MCF 10A (cell line): ENCODE measurements at regions of chr2 and their contacts with region 1.

Region 1: DNA sequence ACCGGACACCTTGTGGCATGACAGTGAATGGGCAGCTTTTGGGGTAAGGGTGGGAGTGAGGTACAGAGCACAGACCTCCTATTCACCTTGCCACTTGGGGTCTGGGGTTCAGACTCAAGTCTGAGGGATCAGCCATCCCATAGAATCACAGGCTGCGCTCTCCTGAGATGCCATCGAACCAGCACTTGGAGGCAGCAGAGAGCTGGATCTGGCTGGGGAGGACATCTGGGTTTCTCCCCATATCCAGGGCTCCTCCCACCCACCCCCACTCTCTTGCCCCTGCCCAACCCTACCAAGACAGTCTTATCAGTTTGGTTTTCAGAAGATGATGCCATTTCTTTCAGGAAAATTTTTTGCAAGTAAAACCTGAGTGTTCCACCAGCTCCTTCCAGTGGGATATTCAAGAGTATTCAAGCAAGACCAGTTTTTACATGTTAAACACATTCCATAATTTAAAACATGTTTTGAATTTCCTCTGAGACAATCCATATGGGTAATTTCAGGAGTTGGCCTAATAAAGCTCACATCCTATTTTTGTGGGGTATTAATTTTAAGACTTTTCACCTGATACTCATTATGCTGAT is 29.2 kb upstream of the TEX44 start:
- DNase-seq: peak; percentile 70
- H3K4me3 Mint-ChIP-seq: no peak overlapping the region
- H3K27ac Mint-ChIP-seq: no peak overlapping the region
- H3K4me1 Mint-ChIP-seq: no peaks in the 10 kb centered on the region
- H3K27me3 Mint-ChIP-seq: no peaks in the 10 kb centered on the region
- CTCF ChIP-seq: peak; percentile 78

Region 2: DNA sequence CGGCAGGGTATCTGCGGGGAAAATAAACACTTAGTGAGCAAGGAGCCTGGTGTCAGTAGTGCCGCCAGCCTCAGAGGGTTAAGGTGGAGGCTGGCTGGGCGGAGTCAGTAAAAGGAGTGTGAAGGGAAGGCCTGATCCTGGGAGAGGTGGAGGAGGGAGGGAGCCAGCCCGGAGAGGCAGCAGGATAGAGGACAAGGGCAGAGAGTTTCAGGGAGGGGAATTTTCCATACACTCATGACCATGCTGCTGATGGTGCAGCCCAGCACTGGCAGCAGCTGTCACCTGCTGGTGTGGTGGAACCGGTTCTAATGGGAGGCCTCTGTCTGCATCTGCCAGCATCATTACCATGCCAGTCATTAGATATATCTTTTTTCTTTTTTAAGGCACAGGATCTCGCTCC is 27.1 kb after region 1 on chr2:
- CTCF ChIA-PET with region 1: interaction called, 11 read pairs
- POLR2A ChIA-PET with region 1: interaction called, 5 read pairs
- intact Hi-C with region 1: no loop called
- DNase-seq: no peak
- H3K4me3 Mint-ChIP-seq: no peak overlapping the region
- H3K27ac Mint-ChIP-seq: no peak overlapping the region
- H3K4me1 Mint-ChIP-seq: no peaks in the 10 kb centered on the region
- H3K27me3 Mint-ChIP-seq: no peaks in the 10 kb centered on the region
- CTCF ChIP-seq: no peak